MCF 10A (cell line): ENCODE measurements at regions of chr16 and their contacts with region 1.

Region 1: GRCh38 chr16:35585411-35585810 is 2126.0 kb downstream of the TP53TG3F start:
- DNase-seq: no peak
- H3K4me3 Mint-ChIP-seq: no peak overlapping the region
- H3K27ac Mint-ChIP-seq: no peak overlapping the region
- H3K4me1 Mint-ChIP-seq: no peaks in the 10 kb centered on the region
- H3K27me3 Mint-ChIP-seq: no peaks in the 10 kb centered on the region
- CTCF ChIP-seq: no peak

Region 2: DNA sequence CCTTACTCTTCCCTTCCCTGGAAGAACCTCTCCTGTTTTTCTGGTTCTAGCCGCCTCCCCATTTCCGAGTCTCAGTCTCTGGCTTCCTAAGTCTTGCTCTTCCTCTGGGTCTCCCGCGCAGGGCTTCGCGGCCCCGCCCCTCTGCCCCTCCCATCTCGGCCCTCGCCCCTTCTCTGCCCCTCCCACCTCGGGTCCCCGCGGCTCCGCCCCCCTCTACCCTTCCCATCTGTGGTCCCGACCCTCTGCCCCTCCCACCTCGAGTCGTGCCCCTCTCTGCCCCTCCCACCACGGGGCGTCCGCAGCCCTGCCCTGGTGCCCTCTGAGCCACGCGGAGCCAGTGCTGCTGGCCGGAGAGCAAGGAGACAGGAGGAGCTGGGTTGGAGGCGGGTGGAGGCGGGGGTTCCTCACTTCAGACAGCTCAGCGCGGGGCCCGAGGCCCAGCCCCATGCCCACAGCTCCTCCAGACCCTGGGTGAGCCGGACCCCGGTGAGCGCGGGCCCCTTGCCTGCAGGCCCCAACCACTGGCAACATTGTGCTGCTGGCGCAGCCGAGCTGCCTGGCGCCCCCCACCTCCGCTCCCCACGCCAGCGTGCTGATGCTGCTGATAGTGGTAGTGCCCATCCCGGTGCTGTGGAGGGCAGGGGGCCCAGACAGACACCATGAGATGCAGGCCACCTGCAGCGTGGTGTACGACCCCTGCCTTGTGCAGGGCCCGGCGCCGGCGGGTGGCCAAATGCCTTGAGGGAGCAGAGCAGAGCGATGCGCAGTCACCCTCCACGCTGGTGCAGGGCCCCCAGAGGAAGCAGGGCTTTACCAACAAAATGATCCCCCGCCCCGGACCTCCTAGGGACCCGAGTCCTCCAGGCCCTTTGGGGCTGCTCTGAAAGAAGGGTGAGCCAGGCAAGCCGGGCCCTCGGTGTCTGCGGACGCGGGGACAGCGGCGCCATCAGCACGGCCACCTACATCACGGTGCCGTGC is 10.7 kb before region 1 on chr16:
- CTCF ChIA-PET with region 1: interaction called, 26 read pairs
- POLR2A ChIA-PET with region 1: no interaction called
- intact Hi-C with region 1: no loop called
- DNase-seq: no peak
- H3K4me3 Mint-ChIP-seq: no peak overlapping the region
- H3K27ac Mint-ChIP-seq: no peak overlapping the region
- H3K4me1 Mint-ChIP-seq: no peaks in the 10 kb centered on the region
- H3K27me3 Mint-ChIP-seq: no peaks in the 10 kb centered on the region
- CTCF ChIP-seq: no peak

Region 3: GRCh38 chr16:35598696-35599332 is 13.4 kb after region 1 on chr16:
- CTCF ChIA-PET with region 1: interaction called, 10 read pairs
- POLR2A ChIA-PET with region 1: interaction called, 3 read pairs
- intact Hi-C with region 1: no loop called
- DNase-seq: peak; percentile 65
- H3K4me3 Mint-ChIP-seq: peak overlapping the region; percentile 76
- H3K27ac Mint-ChIP-seq: peak overlapping the region; percentile 62
- H3K4me1 Mint-ChIP-seq: peaks cover 30% of the 10 kb centered on the region
- H3K27me3 Mint-ChIP-seq: no peaks in the 10 kb centered on the region
- CTCF ChIP-seq: no peak